Activated CD8-positive, alpha-beta T cell treated with anti-CD3 and anti-CD28 coated beads, Interleukin-2, amount 10 ng/mL, durations not matched to agents 7 days and 5 days (primary cell): ENCODE measurements at regions of chr2 and their contacts with region 1.

Region 1: DNA sequence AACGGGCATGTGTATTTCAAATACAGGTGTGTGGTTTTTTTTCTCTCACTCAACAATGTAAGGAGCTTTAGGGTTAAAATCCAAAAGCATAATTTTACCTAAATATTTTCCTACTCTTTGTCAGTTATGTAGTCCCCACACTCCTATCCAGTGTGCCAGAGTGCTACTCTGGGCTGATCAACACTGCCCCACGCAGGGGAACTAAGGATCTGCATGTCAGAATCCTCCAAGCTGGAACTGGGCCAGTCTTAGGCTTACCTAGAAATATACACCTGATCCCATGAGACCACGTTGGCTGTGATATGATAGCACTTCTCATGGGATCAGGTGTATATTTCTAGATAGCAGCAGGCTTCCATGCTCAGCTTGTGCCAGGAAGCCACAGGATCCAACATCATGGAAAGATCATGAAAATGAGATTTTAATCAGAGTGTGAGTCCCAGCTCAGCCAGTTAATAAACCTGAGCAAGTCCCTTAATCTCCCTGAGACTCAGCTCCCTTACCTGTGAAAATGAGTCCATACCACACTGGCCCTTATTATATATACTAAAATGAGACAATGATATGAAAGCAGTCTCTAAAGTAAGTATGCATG is 29.7 kb downstream of the CCDC141 start:
- DNase-seq: peak; percentile 70
- ATAC-seq: peak; percentile 87
- H3K4me3 Mint-ChIP-seq: no peak overlapping the region
- H3K27ac Mint-ChIP-seq: no peak overlapping the region
- H3K4me1 Mint-ChIP-seq: peaks cover 28% of the 10 kb centered on the region
- H3K27me3 Mint-ChIP-seq: no peaks in the 10 kb centered on the region

Region 2: DNA sequence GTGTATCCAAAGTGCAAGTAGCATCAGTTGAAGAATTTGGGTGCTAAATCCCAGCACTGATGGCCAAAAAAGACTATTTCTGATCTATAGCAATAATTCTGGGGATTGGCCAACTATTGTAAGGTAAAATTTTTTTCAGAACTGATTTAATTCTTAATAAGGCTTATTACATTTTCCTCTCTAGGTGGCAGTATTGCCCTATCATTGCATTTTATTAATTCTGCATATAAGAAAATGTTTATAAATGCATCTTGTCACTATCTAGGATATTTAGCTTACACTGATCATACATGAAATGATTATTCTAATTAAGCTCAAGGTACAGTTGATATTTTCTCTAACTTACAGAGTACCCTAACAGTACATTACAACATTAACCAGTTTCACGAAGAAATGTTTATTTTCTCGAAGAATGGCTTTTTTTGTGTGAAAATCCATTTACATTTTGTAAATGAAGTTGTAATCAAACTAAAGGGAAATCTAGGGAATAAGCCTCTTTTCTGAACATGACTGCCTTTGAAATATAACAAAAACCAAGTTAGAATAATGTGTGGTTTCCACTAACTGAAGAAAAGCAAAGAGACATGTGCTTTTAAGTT is 224.1 kb before region 1 on chr2:
- CTCF ChIA-PET with region 1: interaction called, 16 read pairs
- POLR2A ChIA-PET with region 1: no interaction called
- DNase-seq: no peak
- ATAC-seq: no peak
- H3K4me3 Mint-ChIP-seq: no peak overlapping the region
- H3K27ac Mint-ChIP-seq: no peak overlapping the region
- H3K4me1 Mint-ChIP-seq: no peaks in the 10 kb centered on the region
- H3K27me3 Mint-ChIP-seq: no peaks in the 10 kb centered on the region

Region 3: DNA sequence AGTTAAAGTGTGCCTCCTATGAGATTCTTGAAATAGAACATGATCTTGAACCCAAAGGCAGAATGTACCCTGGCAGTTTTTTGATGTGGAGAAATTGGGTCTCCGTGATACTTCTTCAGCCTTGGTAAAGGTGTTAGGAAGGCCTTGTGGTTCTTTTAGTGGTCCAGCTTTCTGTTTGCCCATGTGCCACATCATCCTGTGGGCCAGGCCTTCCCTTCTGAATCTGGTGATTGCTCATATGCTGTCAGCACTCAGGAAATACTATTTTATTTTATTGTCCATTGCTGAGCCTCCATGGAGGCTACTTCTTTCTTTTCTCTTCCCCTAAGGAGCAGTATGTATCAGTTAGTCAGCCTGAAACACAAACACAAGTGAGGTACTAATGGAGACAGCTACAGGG is 23.2 kb before region 1 on chr2:
- CTCF ChIA-PET with region 1: interaction called, 11 read pairs
- POLR2A ChIA-PET with region 1: no interaction called
- DNase-seq: no peak
- ATAC-seq: no peak
- H3K4me3 Mint-ChIP-seq: no peak overlapping the region
- H3K27ac Mint-ChIP-seq: no peak overlapping the region
- H3K4me1 Mint-ChIP-seq: peaks cover 25% of the 10 kb centered on the region
- H3K27me3 Mint-ChIP-seq: no peaks in the 10 kb centered on the region

Region 4: GRCh38 chr2:179049546-179050311 is 29.5 kb after region 1 on chr2 and contains the start of gene CCDC141:
- CTCF ChIA-PET with region 1: interaction called, 27 read pairs
- POLR2A ChIA-PET with region 1: interaction called, 7 read pairs
- DNase-seq: peak; percentile 59
- ATAC-seq: peak; percentile 80
- H3K4me3 Mint-ChIP-seq: peak within 1 kb of the TSS; percentile 85
- H3K27ac Mint-ChIP-seq: peak within 1 kb of the TSS; percentile 93
- H3K4me1 Mint-ChIP-seq: peaks cover 60% of the 10 kb centered on the region
- H3K27me3 Mint-ChIP-seq: no peaks in the 10 kb centered on the region
- total RNA-seq, gene CCDC141: 17.0 to 19.5 TPM

Region 5: GRCh38 chr2:179129574-179130238 is 109.5 kb after region 1 on chr2:
- CTCF ChIA-PET with region 1: interaction called, 70 read pairs
- POLR2A ChIA-PET with region 1: no interaction called
- DNase-seq: peak; percentile 49
- ATAC-seq: no peak
- H3K4me3 Mint-ChIP-seq: no peak overlapping the region
- H3K27ac Mint-ChIP-seq: no peak overlapping the region
- H3K4me1 Mint-ChIP-seq: no peaks in the 10 kb centered on the region
- H3K27me3 Mint-ChIP-seq: no peaks in the 10 kb centered on the region

Region 6: DNA sequence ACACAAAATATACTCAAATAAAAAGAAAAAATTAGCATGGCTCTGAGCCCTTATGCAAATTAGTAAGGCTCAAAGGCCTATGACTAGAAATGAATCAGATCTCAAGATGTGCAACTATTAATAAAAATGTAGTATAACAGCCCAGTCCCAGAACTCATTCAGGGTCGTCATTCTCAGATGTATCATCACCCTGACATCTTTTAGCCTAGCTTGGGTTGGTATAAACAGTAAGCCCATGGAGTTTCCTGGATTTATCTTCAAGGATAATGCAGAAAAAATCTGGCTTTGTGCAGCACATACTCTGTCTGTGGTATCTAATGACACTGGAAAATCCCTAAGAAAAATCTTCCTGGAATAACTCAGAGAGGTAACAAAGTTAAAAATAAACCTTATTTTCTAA is 601.9 kb after region 1 on chr2:
- CTCF ChIA-PET with region 1: no interaction called
- POLR2A ChIA-PET with region 1: no interaction called
- DNase-seq: no peak
- ATAC-seq: no peak
- H3K4me3 Mint-ChIP-seq: no peak overlapping the region
- H3K27ac Mint-ChIP-seq: no peak overlapping the region
- H3K4me1 Mint-ChIP-seq: no peaks in the 10 kb centered on the region
- H3K27me3 Mint-ChIP-seq: no peaks in the 10 kb centered on the region